Activated CD4-positive, alpha-beta T cell treated with anti-CD3 and anti-CD28 coated beads for 36 hours (primary cell): ENCODE measurements at regions of chr17 and their contacts with region 1.

Region 1: DNA sequence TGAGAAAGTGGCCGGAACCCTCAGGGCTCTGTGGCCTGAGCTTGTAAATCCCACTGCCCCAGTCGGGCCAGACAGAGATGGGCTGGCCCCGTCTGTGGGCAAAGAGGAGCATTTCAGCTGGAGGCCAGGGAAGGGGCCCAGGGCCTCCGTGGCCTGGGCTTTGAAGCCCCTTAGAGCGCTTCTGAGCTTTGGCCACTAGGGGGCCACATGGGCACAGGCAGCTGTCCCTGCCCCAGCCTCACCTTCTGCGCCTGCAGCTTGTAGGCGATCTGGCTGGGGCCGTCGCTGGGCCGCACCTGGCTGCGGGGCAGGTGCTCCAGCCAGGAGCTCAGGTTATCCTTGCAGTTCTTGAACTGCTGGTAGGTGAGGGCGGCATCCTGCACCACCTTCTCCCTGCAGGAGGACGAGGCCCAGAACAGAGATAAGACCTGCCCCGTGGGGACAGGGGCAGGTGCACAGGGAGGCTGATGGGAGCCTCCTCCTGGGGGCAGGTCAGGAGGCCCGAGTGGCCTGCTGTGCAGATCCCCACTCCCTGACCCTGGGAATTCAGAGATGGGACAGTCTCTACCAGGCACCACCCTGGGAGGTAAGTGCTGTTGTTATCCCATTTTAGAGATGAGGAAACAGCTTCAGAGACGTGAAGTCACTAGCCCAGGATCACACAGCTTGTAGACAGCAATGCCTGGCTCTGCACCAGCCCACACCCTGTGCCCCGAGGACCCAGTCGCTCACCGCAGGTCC is 12.8 kb downstream of the EVPL start:
- DNase-seq: peak; percentile 90
- ATAC-seq: peak; percentile 99
- H3K4me3 Mint-ChIP-seq: no peak overlapping the region
- H3K27ac Mint-ChIP-seq: no peak overlapping the region
- H3K4me1 Mint-ChIP-seq: peaks cover 3% of the 10 kb centered on the region
- H3K27me3 Mint-ChIP-seq: no peaks in the 10 kb centered on the region

Region 2: GRCh38 chr17:75832164-75832651 is 182.1 kb before region 1 on chr17:
- CTCF ChIA-PET with region 1: no interaction called
- POLR2A ChIA-PET with region 1: no interaction called
- intact Hi-C with region 1: no loop called
- DNase-seq: peak; percentile 72
- ATAC-seq: peak; percentile 63
- H3K4me3 Mint-ChIP-seq: peak overlapping the region; percentile 61
- H3K27ac Mint-ChIP-seq: peak overlapping the region; percentile 84
- H3K4me1 Mint-ChIP-seq: peaks cover 36% of the 10 kb centered on the region
- H3K27me3 Mint-ChIP-seq: no peaks in the 10 kb centered on the region

Region 3: DNA sequence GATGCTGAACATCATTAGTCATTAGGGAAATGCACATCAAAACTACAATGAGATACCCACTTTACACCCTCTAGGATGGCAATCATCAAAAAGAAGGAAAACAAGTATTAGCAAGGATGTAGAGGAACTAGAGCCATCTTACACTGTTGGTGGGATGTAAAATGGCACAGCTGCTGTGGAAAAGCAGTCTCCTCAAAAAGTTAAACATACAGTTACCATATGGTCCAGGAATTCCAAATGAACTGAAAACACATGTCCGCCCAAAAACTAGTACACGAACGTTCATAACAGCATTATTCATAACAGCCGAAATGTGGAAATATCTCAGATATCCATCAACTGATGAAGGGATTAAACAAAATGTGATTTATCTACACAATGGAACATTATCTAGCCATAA is 80.5 kb before region 1 on chr17:
- CTCF ChIA-PET with region 1: no interaction called
- POLR2A ChIA-PET with region 1: no interaction called
- intact Hi-C with region 1: no loop called
- DNase-seq: no peak
- ATAC-seq: no peak
- H3K4me3 Mint-ChIP-seq: no peak overlapping the region
- H3K27ac Mint-ChIP-seq: no peak overlapping the region
- H3K4me1 Mint-ChIP-seq: no peaks in the 10 kb centered on the region
- H3K27me3 Mint-ChIP-seq: no peaks in the 10 kb centered on the region

Region 4: DNA sequence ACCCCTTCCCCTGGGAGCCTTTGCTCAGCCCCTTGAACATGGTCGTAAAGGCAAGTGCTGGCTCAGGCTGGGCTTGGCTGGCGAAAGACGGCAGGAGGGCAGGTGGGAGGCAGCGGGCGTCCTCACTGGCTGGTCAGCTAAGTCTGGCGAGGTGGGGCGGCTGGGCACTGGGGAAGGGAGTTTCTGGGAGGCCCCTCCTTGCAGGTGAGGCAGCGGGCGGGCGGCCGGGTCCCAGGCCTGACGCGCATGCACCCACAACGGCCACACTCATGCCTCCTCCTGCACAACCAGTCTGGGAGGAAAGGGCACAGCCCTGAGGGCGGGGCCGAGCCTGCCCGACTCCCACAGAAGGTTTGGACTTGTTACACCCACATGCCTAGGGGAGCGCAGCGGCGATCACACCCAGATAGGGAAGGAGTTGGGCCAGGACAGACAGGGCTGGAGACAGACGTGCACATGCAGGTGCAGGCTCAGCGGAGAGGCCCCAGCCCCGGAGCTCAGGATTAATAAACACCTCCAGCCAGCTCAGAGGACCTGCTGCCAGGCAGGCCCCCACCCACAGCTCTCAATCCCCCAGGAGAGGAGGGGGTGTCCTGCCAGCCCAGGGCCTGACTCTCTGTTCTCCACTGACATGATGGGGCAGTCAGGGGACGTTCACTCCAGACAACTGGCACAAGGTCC is 12.9 kb after region 1 on chr17 and contains the start of gene EVPL:
- CTCF ChIA-PET with region 1: interaction called, 13 read pairs
- POLR2A ChIA-PET with region 1: no interaction called
- intact Hi-C with region 1: no loop called
- DNase-seq: no peak
- ATAC-seq: no peak
- H3K4me3 Mint-ChIP-seq: no peak within 1 kb of the TSS
- H3K27ac Mint-ChIP-seq: no peak within 1 kb of the TSS
- H3K4me1 Mint-ChIP-seq: peaks cover 12% of the 10 kb centered on the region
- H3K27me3 Mint-ChIP-seq: no peaks in the 10 kb centered on the region
- total RNA-seq, gene EVPL: 0.04 to 0.16 TPM

Region 5: DNA sequence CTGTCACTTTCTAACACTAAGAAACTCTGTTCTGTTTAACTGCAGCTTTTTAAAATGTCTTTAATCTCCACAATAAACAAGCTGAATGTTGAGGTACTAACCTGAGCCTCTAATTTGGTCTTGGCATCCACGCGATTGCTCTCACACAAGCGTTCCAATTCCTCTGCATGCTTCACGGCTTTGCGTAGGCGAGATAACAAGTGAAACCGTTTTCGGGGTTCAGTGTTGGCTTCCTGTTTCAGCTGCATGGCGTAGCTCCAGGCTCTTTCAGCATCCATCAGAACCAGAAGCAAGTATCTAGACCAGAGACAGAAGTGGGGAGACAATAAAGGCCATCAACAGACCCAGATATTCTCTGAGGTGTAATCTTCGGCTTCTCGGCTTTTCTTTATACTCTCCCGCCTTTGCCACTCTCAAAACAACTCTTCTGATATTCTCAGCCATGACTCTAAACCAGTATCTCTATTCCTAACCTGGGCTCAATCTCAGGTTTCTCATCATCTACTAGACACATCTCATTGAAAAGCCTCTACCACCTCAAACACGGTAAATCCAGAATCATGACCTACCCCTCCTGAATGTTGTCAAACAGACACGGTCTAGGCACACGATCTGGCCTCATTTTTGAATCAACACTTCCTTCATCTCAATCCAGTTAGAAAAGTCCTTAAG is 49.7 kb after region 1 on chr17:
- CTCF ChIA-PET with region 1: interaction called, 16 read pairs
- POLR2A ChIA-PET with region 1: no interaction called
- intact Hi-C with region 1: no loop called
- DNase-seq: peak; percentile 81
- ATAC-seq: peak; percentile 91
- H3K4me3 Mint-ChIP-seq: peak overlapping the region; percentile 63
- H3K27ac Mint-ChIP-seq: peak overlapping the region; percentile 81
- H3K4me1 Mint-ChIP-seq: peaks cover 31% of the 10 kb centered on the region
- H3K27me3 Mint-ChIP-seq: no peaks in the 10 kb centered on the region

Region 6: DNA sequence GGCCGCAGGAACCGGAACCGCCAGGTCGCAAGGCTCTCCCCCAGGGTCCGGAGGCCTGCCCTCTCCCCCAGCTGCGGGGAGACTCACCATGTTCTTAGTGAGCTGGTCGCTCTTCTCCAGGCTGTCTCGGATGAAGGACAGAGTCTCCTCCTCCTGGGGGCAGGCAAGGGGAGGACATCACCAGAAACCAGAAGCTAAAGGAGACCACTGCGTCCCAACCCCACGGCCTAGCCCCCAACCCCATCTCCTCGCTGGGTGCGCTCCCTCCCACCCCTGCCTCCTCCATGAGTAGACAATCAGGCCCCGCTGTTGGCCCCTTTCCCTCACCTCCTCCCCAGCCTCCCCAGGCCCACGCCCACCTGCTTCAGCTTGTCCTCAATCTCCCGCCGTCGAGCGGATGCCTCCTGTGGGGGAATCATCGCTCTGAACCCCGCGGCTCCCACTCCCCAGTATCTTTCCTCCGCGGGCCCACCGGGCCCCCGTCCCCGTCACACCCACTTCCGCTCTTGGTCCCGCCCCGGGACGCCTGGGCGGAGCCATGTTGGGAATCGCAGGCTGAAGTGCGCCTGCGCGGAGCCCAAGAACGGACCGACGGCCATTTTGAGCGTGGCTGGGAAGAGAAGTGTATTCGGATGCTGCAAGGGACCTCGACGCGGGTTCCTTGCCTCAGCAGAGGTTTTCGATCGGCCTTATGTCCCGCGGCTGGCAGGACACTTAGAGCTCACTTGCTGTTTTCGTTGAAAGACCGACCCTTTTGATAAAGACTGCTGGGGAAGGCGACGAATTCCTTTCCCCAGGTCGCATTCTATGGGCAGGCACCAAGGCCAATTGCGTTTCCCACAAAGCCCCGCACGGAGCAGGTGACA is 89.2 kb after region 1 on chr17 and contains the start of gene EXOC7:
- CTCF ChIA-PET with region 1: interaction called, 10 read pairs
- POLR2A ChIA-PET with region 1: no interaction called
- intact Hi-C with region 1: loop called (anchors 1 to 2 kb)
- DNase-seq: peak; percentile 96
- ATAC-seq: peak; percentile 94
- H3K4me3 Mint-ChIP-seq: peak within 1 kb of the TSS; percentile 90
- H3K27ac Mint-ChIP-seq: peak within 1 kb of the TSS; percentile 93
- H3K4me1 Mint-ChIP-seq: peaks cover 18% of the 10 kb centered on the region
- H3K27me3 Mint-ChIP-seq: no peaks in the 10 kb centered on the region
- total RNA-seq, gene EXOC7: 73.0 to 77.0 TPM

Region 7: GRCh38 chr17:76296186-76296585 is 281.8 kb after region 1 on chr17:
- CTCF ChIA-PET with region 1: interaction called, 9 read pairs
- POLR2A ChIA-PET with region 1: interaction called, 3 read pairs
- intact Hi-C with region 1: loop called (anchors 1 to 5 kb)
- DNase-seq: no peak
- ATAC-seq: no peak
- H3K4me3 Mint-ChIP-seq: no peak overlapping the region
- H3K27ac Mint-ChIP-seq: no peak overlapping the region
- H3K4me1 Mint-ChIP-seq: no peaks in the 10 kb centered on the region
- H3K27me3 Mint-ChIP-seq: no peaks in the 10 kb centered on the region

Region 8: DNA sequence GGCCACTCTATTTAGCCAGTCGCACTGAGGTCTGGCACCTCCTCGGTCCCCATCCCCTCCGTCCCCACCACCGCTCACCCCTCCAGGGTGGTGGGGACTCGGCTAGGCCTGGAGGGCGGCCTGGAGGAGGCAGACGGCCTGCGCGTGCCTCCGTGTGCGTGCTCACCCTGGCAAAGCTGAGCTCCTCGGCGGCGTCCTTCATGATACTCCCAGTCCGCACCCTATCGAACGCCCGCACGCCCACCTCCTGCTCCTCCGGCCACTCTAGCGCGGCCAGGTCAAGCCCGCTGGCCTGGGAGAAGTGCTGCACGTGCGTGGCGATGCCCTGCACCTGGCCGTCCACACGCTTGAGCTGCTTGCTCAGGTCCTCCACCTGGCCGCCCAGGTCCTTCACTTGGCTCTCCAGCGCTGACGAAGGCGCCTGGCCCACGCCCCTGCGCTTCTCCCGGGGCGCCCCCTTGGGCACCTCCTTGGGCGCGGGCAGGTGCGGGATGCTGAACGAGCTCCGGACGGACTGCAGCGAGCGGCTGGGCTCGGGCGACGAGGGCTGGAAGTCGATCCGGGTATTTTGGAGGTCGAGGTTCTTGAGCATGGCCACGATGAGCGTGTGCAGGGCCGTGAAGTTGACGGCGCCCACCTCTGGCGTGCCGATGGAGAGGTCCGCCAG is 293.1 kb after region 1 on chr17:
- CTCF ChIA-PET with region 1: interaction called, 9 read pairs
- POLR2A ChIA-PET with region 1: no interaction called
- intact Hi-C with region 1: loop called in 1 of 2 experiments (anchors 5 kb)
- DNase-seq: no peak
- ATAC-seq: no peak
- H3K4me3 Mint-ChIP-seq: no peak overlapping the region
- H3K27ac Mint-ChIP-seq: no peak overlapping the region
- H3K4me1 Mint-ChIP-seq: no peaks in the 10 kb centered on the region
- H3K27me3 Mint-ChIP-seq: no peaks in the 10 kb centered on the region